ENCODE measurements at regions of chr2 and their contacts with region 1.

Region 1: GRCh38 chr2:240913810-240914644 is 7.9 kb downstream of the CROCC2 start:
- DNase-seq: peak in 1 of 2 donors; percentile 39
- ATAC-seq: peak; percentile 31 to 59
- H3K4me3 ChIP-seq: peak overlapping the region in 1 of 4 donors; percentile 5
- H3K27ac ChIP-seq: no peak overlapping the region
- H3K4me1 ChIP-seq: peaks cover 3 to 6% of the 10 kb centered on the region in 2 donors
- H3K27me3 ChIP-seq: peaks cover 5 to 13% (median 8%) of the 10 kb centered on the region in 3 donors
- CTCF ChIP-seq: peak; percentile 63 to 92 (median 88)
- POLR2A ChIP-seq: no peak

Region 2: GRCh38 chr2:241149925-241150659 is 236.1 kb after region 1 on chr2 and contains the start of gene PPP1R7:
- in situ Hi-C with region 1: no loop called
- intact Hi-C with region 1: loop called (anchors 5 kb)
- DNase-seq: peak; percentile 90 to 93
- ATAC-seq: peak; percentile 87 to 91
- H3K4me3 ChIP-seq: peak within 1 kb of the TSS; percentile 72 to 99 (median 83)
- H3K27ac ChIP-seq: peak within 1 kb of the TSS; percentile 78 to 93 (median 84)
- H3K4me1 ChIP-seq: peaks cover 13 to 15% of the 10 kb centered on the region in 2 donors
- H3K27me3 ChIP-seq: no peaks in the 10 kb centered on the region
- CTCF ChIP-seq: no peak
- POLR2A ChIP-seq: peak; percentile 78 to 82
- total RNA-seq, gene PPP1R7: 58.6 to 87.8 (median 67.2) TPM

Measured in gastrocnemius medialis (tissue), 4 donors.